A549 (cell line): ENCODE measurements at regions of chr1 and their contacts with region 1.

Region 1: DNA sequence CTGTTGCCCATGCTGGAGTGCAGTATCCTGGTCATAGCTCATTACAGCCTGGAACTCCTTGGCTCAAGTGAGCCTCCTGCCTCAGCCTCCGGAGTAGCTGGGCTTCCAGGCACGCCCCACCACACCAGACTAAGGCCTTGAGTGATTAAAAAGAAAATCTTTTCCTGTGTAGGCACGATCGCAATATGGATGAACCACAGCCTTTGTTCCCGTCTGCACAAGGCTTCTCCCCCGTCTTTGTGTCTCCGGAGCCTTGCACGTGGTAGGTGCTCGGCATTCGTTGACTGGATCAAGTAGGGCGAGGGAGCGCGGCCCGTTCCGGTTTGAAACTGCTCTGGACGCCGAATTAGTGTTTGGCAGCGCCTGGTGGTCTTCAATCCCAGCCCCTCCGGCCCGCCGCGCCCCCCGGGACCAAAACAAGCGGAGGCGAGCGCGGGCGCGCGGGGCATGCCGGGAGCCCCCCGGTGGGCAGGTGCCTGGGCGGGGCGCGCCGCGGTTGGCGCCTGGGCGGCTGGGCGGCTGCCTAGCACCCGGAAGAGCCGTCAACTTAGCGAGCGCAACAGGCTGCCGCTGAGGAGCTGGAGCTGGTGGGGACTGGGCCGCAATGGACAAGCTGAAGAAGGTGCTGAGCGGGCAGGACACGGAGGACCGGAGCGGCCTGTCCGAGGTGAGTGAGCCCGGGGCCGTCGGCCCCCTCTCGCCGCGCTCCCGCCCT is at the start of gene SFT2D2:
- DNase-seq: peak; percentile 83 to 84
- ATAC-seq: peak; percentile 92 to 96
- H3K4me3 ChIP-seq: peak within 1 kb of the TSS; percentile 86
- H3K27ac ChIP-seq: peak within 1 kb of the TSS; percentile 94 to 95
- H3K4me1 ChIP-seq: peaks cover 50% of the 10 kb centered on the region
- CTCF ChIP-seq: no peak
- EP300 ChIP-seq: no peak
- POLR2A ChIP-seq: peak; percentile 72
- RAD21 ChIP-seq: no peak
- polyA plus RNA-seq, gene SFT2D2: 40.1 and 43.8 TPM in 2 replicates

Region 2: GRCh38 chr1:167774710-167775109 is 450.9 kb before region 1 on chr1:
- CTCF ChIA-PET with region 1: no interaction called
- POLR2A ChIA-PET with region 1: no interaction called
- DNase-seq: peak in 1 of 2 experiments; percentile 5
- ATAC-seq: no peak
- H3K4me3 ChIP-seq: no peak overlapping the region
- H3K27ac ChIP-seq: no peak overlapping the region
- H3K4me1 ChIP-seq: peaks cover 10% of the 10 kb centered on the region; the same call in 2 of the 3 replicates
- CTCF ChIP-seq: no peak
- EP300 ChIP-seq: no peak
- POLR2A ChIP-seq: no peak
- RAD21 ChIP-seq: no peak

Region 3: DNA sequence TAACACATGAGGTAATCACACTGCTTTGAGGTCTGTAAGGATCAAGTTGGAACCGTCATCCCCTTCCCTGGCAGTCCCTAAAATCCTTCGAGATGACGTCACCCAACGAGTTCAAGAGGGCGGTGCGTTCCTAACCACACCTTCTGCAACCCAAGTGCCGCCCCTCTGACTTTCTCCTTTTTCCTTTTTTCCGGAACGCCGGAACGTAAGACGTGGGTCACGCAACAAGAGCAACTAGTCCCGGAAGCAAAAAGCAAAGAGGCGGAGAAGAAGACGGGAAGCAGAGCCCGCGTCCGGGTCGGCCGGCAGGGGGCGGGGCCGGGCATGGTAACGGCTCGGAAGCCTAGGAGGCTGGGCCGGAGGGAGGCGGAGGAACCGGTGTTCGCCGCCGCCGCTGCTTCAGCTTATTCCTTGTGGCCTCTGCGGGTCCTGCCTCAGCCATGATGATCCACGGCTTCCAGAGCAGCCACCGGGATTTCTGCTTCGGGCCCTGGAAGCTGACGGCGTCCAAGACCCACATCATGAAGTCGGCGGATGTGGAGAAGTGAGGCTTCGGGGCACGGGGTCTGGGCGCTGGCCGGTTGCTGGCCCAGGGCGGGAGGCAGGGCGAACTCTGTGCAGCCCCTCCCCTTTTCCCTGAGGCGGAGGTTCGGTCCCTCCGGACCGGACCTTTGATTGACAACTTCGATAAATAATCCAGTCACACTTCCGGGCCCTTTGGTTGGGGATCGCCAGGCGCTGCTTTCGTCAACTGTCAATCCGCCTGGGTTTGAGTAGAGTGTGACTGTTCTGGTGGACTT is 46.8 kb before region 1 on chr1 and contains the start of gene TIPRL:
- CTCF ChIA-PET with region 1: interaction called, 7 read pairs
- POLR2A ChIA-PET with region 1: interaction called, 11 read pairs
- DNase-seq: peak; percentile 91 to 99
- ATAC-seq: peak; percentile 98
- H3K4me3 ChIP-seq: peak within 1 kb of the TSS; percentile 72
- H3K27ac ChIP-seq: peak within 1 kb of the TSS; percentile 91 to 95
- H3K4me1 ChIP-seq: peaks cover 16% of the 10 kb centered on the region
- CTCF ChIP-seq: peak; percentile 33; the same call in 2 of the 3 replicates
- EP300 ChIP-seq: peak in 1 of 2 experiments; percentile 21; a peak in 1 of 5 replicates
- POLR2A ChIP-seq: peak; percentile 72
- RAD21 ChIP-seq: peak; percentile 32 to 56; a peak in 3 of 5 replicates
- polyA plus RNA-seq, gene TIPRL: 47.5 and 70.7 TPM in 2 replicates

Region 4: GRCh38 chr1:168373869-168374268 is 148.2 kb after region 1 on chr1:
- CTCF ChIA-PET with region 1: no interaction called
- POLR2A ChIA-PET with region 1: no interaction called
- DNase-seq: no peak
- ATAC-seq: no peak
- H3K4me3 ChIP-seq: no peak overlapping the region
- H3K27ac ChIP-seq: no peak overlapping the region
- H3K4me1 ChIP-seq: peaks cover 2% of the 10 kb centered on the region; the same call in 1 of the 3 replicates
- CTCF ChIP-seq: no peak
- EP300 ChIP-seq: no peak
- POLR2A ChIP-seq: no peak
- RAD21 ChIP-seq: no peak